ENCODE measurements at regions of chr5 and their contacts with region 1.

Region 1: GRCh38 chr5:58498340-58498942 is 7.2 kb downstream of the GAPT start:
- DNase-seq: no peak

Region 2: GRCh38 chr5:58849921-58850667 is 351.7 kb after region 1 on chr5:
- intact Hi-C with region 1: loop called in 1 of 2 experiments (anchors 10 kb)
- DNase-seq: no peak

Region 3: DNA sequence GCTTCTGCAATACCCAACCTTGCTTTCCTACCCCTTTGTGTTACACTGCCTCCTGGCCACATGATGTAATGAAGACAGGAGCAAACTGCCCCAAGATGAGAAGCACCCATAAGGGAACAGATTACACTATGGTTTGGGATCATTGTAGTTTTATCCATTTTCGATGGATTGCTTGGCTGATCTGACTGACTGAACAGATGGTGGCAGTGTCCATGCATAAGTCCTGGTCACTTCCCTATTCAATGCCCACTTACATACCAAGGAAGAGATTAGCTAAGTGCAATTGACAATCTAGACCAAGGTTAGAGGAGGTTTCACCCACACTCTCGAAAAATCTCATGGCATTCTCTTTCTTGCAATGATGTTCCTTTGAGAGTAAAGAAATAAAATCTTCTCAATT is 404.3 kb after region 1 on chr5:
- intact Hi-C with region 1: no loop called
- DNase-seq: no peak